ENCODE measurements at regions of chr3 and their contacts with region 1.

Region 1: DNA sequence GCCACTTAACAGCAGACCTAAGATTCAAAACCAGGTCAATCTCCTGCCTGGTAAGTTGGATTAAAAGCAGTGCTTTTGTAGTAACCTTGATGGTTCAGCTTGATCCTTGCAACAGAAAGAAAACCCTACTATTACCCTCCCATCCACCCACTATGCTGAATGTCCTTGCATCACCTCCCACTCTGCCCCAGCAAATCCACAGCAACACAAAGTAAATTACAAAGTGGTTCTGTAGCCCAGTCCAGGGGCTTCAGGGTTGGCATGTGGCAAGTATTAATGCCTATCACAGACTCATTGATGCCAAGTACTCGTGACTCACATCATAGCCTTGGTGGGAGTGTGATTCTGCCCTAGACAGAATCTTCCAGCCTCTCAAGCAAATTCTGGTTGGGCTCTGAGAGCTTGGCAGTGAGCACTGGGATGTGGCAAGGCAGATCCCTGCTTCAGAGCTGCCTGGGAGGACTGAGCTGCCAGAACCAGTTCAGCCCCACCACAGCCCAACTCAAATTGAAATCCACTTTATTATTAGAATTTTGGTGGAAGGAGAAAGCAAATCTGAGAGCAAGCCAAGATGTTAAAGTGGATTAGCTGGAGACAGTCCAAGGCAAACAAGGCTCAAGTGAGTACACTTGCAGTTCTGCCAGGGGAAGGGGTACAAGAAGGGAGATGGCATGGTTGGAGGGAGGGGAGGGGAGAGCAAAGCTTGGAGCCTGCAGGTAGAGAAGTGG is 225.8 kb upstream of the UMPS start:
- DNase-seq: no peak
- H3K4me3 Mint-ChIP-seq: no peak overlapping the region
- H3K27ac Mint-ChIP-seq: no peak overlapping the region
- H3K4me1 Mint-ChIP-seq: no peaks in the 10 kb centered on the region
- H3K27me3 Mint-ChIP-seq: peaks cover 22% of the 10 kb centered on the region

Region 2: GRCh38 chr3:124486324-124486723 is 18.2 kb before region 1 on chr3:
- CTCF ChIA-PET with region 1: no interaction called
- intact Hi-C with region 1: loop called (anchors 1 kb)
- DNase-seq: no peak
- H3K4me3 Mint-ChIP-seq: no peak overlapping the region
- H3K27ac Mint-ChIP-seq: no peak overlapping the region
- H3K4me1 Mint-ChIP-seq: peaks cover 7% of the 10 kb centered on the region
- H3K27me3 Mint-ChIP-seq: peaks cover 20% of the 10 kb centered on the region

Measured in activated naive CD4-positive, alpha-beta T cell treated with anti-CD3 and anti-CD28 coated beads for 36 hours (primary cell).